A549 (cell line): ENCODE measurements at regions of chr12 and their contacts with region 1.

Region 1: GRCh38 chr12:110270125-110270962 is 10.7 kb upstream of the ATP2A2 start:
- DNase-seq: peak; percentile 65 to 82
- ATAC-seq: peak; percentile 66 to 72
- H3K4me3 ChIP-seq: peak overlapping the region; percentile 31; the same call in 1 of the 3 replicates
- H3K27ac ChIP-seq: peak overlapping the region; percentile 97 to 99
- H3K4me1 ChIP-seq: peaks cover 80% of the 10 kb centered on the region
- CTCF ChIP-seq: no peak
- EP300 ChIP-seq: no peak
- POLR2A ChIP-seq: no peak
- RAD21 ChIP-seq: no peak

Region 2: DNA sequence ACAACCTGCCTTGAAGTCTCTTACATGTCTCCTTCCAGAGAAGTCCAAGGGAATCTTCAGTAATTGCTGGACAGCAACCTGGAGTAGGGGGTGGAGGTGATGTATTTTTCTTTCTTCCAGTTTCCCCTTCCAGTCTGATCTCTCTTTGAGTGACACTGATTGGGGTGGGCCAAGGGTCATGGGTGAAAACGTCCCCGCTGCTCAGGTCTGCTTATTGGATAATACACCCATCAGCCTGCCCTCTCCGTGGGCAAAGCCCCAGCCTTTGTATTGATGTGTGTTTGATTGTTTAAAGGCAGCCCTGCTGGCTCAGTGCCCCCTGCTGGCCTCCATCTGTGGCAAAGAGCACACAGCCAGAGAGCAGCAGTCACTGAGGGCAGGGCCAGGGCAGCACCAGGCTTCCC is 25.0 kb before region 1 on chr12:
- CTCF ChIA-PET with region 1: interaction called, 15 read pairs
- POLR2A ChIA-PET with region 1: interaction called, 10 read pairs
- DNase-seq: peak in 1 of 2 experiments; percentile 73
- ATAC-seq: peak in 1 of 2 experiments; percentile 18; a peak in 3 of 6 replicates
- H3K4me3 ChIP-seq: no peak overlapping the region
- H3K27ac ChIP-seq: peak overlapping the region; percentile 96 to 97
- H3K4me1 ChIP-seq: peaks cover 61% of the 10 kb centered on the region
- CTCF ChIP-seq: peak; percentile 42
- EP300 ChIP-seq: no peak
- POLR2A ChIP-seq: no peak
- RAD21 ChIP-seq: peak; percentile 47 to 68; a peak in 4 of 5 replicates